CD8-positive, alpha-beta memory T cell (primary cell): ENCODE measurements at regions of chr10 and their contacts with region 1.

Region 1: DNA sequence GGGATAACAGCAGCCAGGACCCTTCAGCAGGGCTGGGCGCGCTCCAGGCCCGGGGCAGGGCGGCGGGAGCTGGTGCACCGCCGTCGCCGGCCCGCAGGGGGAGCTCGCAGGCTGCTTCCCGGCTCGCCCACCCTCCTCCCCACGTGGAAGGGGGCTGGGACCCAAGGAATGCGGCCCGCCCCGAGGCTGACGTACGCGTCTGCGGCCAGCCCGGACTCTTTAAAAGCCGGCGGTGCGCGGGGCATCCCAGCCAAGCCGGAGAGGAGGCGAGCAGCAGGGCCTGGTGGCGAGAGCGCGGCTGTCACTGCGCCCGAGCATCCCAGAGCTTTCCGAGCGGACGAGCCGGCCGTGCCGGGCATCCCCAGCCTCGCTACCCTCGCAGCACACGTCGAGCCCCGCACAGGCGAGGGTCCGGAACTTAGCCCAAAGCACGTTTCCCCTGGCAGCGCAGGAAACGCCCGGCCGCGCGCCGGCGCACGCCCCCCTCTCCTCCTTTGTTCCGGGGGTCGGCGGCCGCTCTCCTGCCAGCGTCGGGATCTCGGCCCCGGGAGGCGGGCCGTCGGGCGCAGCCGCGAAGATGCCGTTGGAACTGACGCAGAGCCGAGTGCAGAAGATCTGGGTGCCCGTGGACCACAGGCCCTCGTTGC is at the start of gene PFKFB3:
- DNase-seq: peak; percentile 85 to 94 (median 87)
- H3K4me3 ChIP-seq: peak within 1 kb of the TSS; percentile 83
- H3K4me3 Mint-ChIP-seq: peak within 1 kb of the TSS; percentile 91 to 99 (median 95)
- H3K27ac ChIP-seq: peak within 1 kb of the TSS; percentile 64
- H3K27ac Mint-ChIP-seq: peak within 1 kb of the TSS; percentile 73 to 96 (median 92)
- H3K4me1 ChIP-seq: peaks cover 19% of the 10 kb centered on the region
- H3K4me1 Mint-ChIP-seq: peaks cover 20 to 41% (median 34%) of the 10 kb centered on the region in 3 donors
- H3K27me3 ChIP-seq: no peaks in the 10 kb centered on the region
- H3K27me3 Mint-ChIP-seq: peaks cover 0 to 2% of the 10 kb centered on the region in 2 donors
- total RNA-seq, gene PFKFB3: 53.6 to 60.1 TPM

Region 2: DNA sequence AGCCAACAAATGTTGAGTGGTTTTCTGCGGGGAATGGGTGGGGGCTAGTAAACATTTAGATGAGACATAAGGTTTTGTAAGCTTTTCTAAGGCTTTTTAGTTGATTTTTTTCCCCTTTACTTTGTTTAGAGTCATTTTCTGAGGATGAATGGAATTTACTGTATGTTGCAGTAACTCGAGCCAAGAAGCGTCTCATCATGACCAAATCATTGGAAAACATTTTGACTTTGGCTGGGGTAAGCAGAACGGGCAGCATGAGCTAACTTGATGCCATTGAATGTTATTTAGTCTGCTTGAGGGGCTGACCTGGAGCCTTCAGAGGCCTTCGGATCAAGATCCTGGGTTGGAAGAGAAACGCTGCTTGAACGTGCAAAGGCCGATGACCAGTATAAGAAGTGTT is 275.5 kb before region 1 on chr10:
- CTCF ChIA-PET with region 1: no interaction called
- POLR2A ChIA-PET with region 1: no interaction called
- DNase-seq: no peak
- H3K4me3 ChIP-seq: no peak overlapping the region
- H3K4me3 Mint-ChIP-seq: no peak overlapping the region
- H3K27ac ChIP-seq: no peak overlapping the region
- H3K27ac Mint-ChIP-seq: peak overlapping the region in 1 of 8 donors; percentile 40
- H3K4me1 ChIP-seq: no peaks in the 10 kb centered on the region
- H3K4me1 Mint-ChIP-seq: no peaks in the 10 kb centered on the region
- H3K27me3 ChIP-seq: no peaks in the 10 kb centered on the region
- H3K27me3 Mint-ChIP-seq: no peaks in the 10 kb centered on the region

Region 3: GRCh38 chr10:6108603-6109443 is 94.0 kb before region 1 on chr10:
- CTCF ChIA-PET with region 1: interaction called, 16 read pairs
- POLR2A ChIA-PET with region 1: no interaction called
- DNase-seq: peak in 3 of 5 donors; percentile 22 to 54 (median 45)
- H3K4me3 ChIP-seq: no peak overlapping the region
- H3K4me3 Mint-ChIP-seq: peak overlapping the region in 5 of 7 donors; percentile 57 to 73 (median 62)
- H3K27ac ChIP-seq: no peak overlapping the region
- H3K27ac Mint-ChIP-seq: peak overlapping the region; percentile 68 to 94 (median 86)
- H3K4me1 ChIP-seq: peaks cover 10% of the 10 kb centered on the region
- H3K4me1 Mint-ChIP-seq: peaks cover 26 to 43% (median 34%) of the 10 kb centered on the region in 3 donors
- H3K27me3 ChIP-seq: no peaks in the 10 kb centered on the region
- H3K27me3 Mint-ChIP-seq: peaks cover 0 to 1% of the 10 kb centered on the region in 2 donors

Region 4: DNA sequence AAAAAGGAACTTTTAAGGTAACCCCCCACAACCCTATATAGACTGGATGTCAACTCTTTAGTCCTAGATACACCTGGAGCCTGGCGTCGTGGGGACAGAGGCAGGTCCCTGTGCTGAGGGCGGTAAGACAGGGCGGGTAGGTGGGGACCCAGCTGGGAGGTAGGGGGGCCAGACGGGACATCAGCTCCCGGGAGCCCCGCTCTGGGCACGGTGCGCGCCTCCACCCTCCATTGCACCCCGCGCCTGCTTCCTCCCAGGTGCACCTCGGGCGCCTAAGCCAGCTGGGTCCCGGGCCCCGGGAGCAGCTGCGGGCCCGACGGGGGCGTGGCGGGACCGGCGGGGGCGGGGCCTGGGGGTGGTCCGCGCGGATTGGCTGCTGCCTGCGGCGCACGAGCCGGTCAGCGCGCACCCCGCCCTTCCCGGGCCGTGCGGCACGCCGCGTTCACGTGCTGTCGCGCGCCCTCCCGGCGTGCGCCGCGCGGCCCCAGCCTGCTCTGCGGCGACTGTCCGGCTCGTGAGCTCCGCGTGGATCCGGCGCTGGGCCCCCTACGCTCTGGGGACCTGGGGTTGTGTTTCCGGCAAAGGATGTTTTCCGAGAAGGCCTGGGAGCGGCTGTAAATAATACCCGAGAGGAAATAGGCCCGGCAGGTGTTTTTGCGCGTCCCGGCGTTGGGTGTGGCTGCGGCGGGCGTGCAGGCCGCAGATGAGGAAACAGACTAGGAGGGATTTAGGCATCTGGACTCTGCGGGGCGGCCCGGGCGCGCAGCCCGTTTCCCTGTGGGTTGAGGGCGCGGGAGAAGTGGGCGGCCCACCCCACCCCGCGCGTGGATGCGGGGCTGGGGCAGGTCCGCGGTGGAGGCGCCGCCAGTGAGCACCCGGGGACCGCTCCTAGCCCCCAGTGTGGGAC is 39.2 kb before region 1 on chr10:
- CTCF ChIA-PET with region 1: interaction called, 15 read pairs
- POLR2A ChIA-PET with region 1: interaction called, 12 read pairs
- DNase-seq: peak; percentile 88 to 93 (median 92)
- H3K4me3 ChIP-seq: peak overlapping the region; percentile 74
- H3K4me3 Mint-ChIP-seq: peak overlapping the region; percentile 85 to 96 (median 92)
- H3K27ac ChIP-seq: peak overlapping the region; percentile 95
- H3K27ac Mint-ChIP-seq: peak overlapping the region; percentile 88 to 99 (median 98)
- H3K4me1 ChIP-seq: peaks cover 24% of the 10 kb centered on the region
- H3K4me1 Mint-ChIP-seq: peaks cover 43 to 52% (median 52%) of the 10 kb centered on the region in 3 donors
- H3K27me3 ChIP-seq: no peaks in the 10 kb centered on the region
- H3K27me3 Mint-ChIP-seq: peaks cover 0 to 1% of the 10 kb centered on the region in 2 donors

Region 5: GRCh38 chr10:6348096-6348874 is 145.5 kb after region 1 on chr10:
- CTCF ChIA-PET with region 1: interaction called, 28 read pairs
- POLR2A ChIA-PET with region 1: interaction called, 22 read pairs
- DNase-seq: peak; percentile 62 to 94 (median 88)
- H3K4me3 ChIP-seq: no peak overlapping the region
- H3K4me3 Mint-ChIP-seq: peak overlapping the region; percentile 63 to 80 (median 75)
- H3K27ac ChIP-seq: peak overlapping the region; percentile 49
- H3K27ac Mint-ChIP-seq: peak overlapping the region; percentile 86 to 98 (median 94)
- H3K4me1 ChIP-seq: peaks cover 36% of the 10 kb centered on the region
- H3K4me1 Mint-ChIP-seq: peaks cover 44 to 48% (median 46%) of the 10 kb centered on the region in 3 donors
- H3K27me3 ChIP-seq: no peaks in the 10 kb centered on the region
- H3K27me3 Mint-ChIP-seq: no peaks in the 10 kb centered on the region